GM12878 (cell line): ENCODE measurements at regions of chr12 and their contacts with region 1.

Region 1: GRCh38 chr12:79690638-79691493 is at the start of gene PAWR:
- DNase-seq: no peak
- ATAC-seq: peak; percentile 68
- H3K4me3 ChIP-seq: peak within 1 kb of the TSS; percentile 96
- H3K27ac ChIP-seq: peak within 1 kb of the TSS; percentile 86
- H3K4me1 ChIP-seq: 0 out of 2 replicates have a peak, but pooled peaks cover 5% of the 10 kb centered on the region
- H3K27me3 ChIP-seq: no peaks in the 10 kb centered on the region
- CTCF ChIP-seq: peak; percentile 19 to 57 (median 31); a peak in 4 of 6 replicates
- EP300 ChIP-seq: no peak
- POLR2A ChIP-seq: 0 out of 2 replicates have a peak, but pooled peaks have one; percentile 46
- RAD21 ChIP-seq: peak; percentile 39
- polyA plus RNA-seq, gene PAWR: 8.1 to 10.0 TPM

Region 2: DNA sequence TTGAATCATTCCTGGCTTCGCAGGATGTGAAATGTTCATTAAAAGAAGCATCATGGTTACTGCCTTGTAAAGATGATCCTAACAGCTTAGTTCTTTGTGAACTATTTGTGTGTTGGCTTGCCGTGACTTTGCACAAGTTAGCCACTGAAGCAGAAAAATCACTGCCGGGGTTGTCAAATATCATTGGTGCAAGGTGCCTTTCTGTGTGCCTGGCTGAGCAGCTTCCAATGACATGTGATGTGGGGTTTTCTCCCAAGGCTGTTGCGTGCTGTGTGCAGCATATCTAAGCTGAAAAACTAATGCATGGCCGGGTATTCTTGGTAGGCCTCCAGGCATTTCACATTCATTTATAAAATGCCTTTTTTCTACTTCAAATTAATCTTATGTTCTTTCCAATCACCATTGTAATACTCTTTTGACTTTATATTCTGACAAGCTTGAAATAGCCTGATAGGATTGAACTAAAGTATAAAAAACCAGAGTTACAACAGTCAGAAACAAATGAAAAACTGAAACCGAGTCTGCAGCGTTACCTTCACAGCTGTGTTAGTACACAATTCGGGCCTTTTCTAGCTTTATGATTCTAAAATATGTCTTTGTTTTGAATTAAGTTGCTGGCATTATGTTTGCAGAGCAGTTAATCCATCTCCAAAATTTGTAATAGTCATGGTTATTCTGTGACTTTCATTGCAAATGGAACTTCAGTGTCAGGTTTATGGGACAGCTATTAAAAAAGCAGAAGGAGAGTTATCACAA is 604.1 kb before region 1 on chr12:
- CTCF ChIA-PET with region 1: no interaction called
- POLR2A ChIA-PET with region 1: no interaction called
- RAD21 ChIA-PET with region 1: no interaction called
- SMC1A ChIA-PET with region 1: no interaction called
- in situ Hi-C with region 1: no loop called
- intact Hi-C with region 1: no loop called
- DNase-seq: no peak
- ATAC-seq: no peak
- H3K4me3 ChIP-seq: no peak overlapping the region
- H3K27ac ChIP-seq: no peak overlapping the region
- H3K4me1 ChIP-seq: no peaks in the 10 kb centered on the region
- H3K27me3 ChIP-seq: no peaks in the 10 kb centered on the region
- CTCF ChIP-seq: no peak
- EP300 ChIP-seq: no peak
- POLR2A ChIP-seq: no peak
- RAD21 ChIP-seq: no peak

Region 3: DNA sequence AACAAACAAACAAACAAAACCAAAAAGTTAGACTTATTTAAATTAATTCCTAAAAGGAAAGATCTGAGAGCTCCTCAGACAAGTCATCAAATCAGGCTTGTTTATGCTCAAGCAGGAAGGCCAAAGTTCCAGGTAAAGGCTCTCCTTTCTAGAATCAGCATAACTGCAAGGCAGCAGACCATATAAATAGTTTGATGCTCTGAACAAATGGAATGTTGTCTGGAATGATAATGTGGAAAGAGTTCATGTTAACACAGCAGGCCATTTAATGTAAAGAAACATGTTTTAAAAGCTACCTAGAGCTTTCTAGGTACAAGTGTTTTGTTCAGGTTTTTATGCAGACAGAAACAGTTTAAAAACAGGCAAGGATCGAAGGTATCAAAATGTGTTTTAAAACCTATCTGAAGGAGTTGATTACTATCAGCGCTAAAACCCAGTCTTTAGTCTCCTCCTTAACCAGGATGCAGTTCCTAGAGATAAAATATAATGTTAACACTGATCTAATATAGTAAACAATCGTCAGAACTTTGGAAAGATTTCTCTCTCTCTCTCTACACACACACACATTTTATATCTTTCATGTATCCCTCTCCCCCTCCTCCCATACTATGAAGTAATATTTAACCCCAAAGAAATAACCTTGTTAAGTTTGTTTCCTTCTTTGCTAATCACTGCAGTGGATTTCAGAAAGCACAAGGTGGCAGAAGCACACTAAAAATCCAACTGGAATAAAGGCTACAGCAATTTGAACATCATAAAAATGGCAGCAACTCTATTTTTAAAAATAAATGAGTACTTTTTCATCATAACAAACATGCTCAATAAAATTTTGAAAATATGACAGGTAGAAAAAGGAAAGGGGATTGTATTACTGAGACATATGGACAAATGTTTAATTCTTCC is 135.6 kb before region 1 on chr12:
- CTCF ChIA-PET with region 1: interaction called, 10 read pairs
- POLR2A ChIA-PET with region 1: interaction called, 3 read pairs
- RAD21 ChIA-PET with region 1: interaction called, 6 read pairs
- SMC1A ChIA-PET with region 1: interaction called, 6 read pairs
- in situ Hi-C with region 1: no loop called
- intact Hi-C with region 1: no loop called
- DNase-seq: no peak
- ATAC-seq: peak; percentile 39; the same call in 2 of the 3 replicates
- H3K4me3 ChIP-seq: no peak overlapping the region
- H3K27ac ChIP-seq: no peak overlapping the region
- H3K4me1 ChIP-seq: no peaks in the 10 kb centered on the region
- H3K27me3 ChIP-seq: no peaks in the 10 kb centered on the region
- CTCF ChIP-seq: peak; percentile 40 to 84 (median 48); a peak in 5 of 6 replicates
- EP300 ChIP-seq: no peak
- POLR2A ChIP-seq: no peak
- RAD21 ChIP-seq: peak; percentile 93

Region 4: DNA sequence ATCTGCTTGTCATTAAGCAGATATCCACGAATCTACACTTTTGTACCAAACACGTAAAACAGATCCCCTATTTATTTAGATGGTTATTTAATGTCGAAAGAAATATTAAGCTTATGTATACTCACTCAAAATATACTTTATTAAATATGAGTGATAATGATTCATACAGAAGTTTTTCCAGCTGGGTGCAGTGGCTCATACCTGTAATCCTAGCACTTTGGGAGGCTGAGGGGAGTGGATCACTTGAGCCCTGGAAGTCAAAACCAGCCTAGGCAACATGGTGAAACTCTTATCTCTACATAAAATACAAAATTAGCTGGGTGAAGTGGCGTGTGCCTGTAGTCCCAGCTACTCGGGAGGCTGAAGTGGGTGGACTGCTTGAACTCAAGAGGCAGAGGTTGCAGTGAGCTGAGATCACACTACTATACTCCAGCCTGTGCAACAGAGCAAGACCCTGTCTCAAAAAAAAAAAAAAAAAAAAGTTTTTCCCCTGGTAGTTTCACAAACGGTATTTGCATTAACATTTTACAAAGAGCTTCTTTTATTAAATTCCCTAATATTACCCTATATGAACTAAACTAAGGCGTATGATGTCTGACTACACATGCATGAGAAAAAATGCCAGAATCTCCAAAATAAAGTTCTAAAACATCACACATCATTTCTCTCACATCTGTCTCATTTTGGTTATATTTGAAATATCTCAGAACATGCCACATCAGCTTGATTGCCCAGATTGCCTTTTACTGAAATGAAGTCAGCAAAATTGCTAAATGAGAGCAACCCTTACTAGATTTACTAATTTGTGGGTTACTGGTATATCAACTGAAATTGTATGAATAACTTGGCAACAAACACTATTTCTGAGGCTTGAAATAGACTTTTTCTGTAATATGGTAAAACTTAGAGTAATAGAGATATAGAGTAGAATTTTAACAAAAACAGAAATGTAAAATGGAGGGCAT is 75.0 kb before region 1 on chr12:
- CTCF ChIA-PET with region 1: interaction called, 27 read pairs
- POLR2A ChIA-PET with region 1: interaction called, 29 read pairs
- RAD21 ChIA-PET with region 1: interaction called, 70 read pairs
- SMC1A ChIA-PET with region 1: interaction called, 55 read pairs
- in situ Hi-C with region 1: no loop called
- intact Hi-C with region 1: loop called (anchors 5 kb)
- DNase-seq: peak; percentile 21
- ATAC-seq: peak; percentile 89
- H3K4me3 ChIP-seq: no peak overlapping the region
- H3K27ac ChIP-seq: peak overlapping the region; percentile 42
- H3K4me1 ChIP-seq: peaks cover 9% of the 10 kb centered on the region
- H3K27me3 ChIP-seq: no peaks in the 10 kb centered on the region
- CTCF ChIP-seq: no peak
- EP300 ChIP-seq: peak; percentile 34 to 38; a peak in 2 of 4 replicates
- POLR2A ChIP-seq: no peak
- RAD21 ChIP-seq: no peak

Region 5: GRCh38 chr12:79674629-79675028 is 16.2 kb before region 1 on chr12:
- CTCF ChIA-PET with region 1: interaction called, 7 read pairs
- POLR2A ChIA-PET with region 1: interaction called, 12 read pairs
- RAD21 ChIA-PET with region 1: interaction called, 23 read pairs
- SMC1A ChIA-PET with region 1: interaction called, 14 read pairs
- in situ Hi-C with region 1: no loop called
- intact Hi-C with region 1: no loop called
- DNase-seq: no peak
- ATAC-seq: peak; percentile 28
- H3K4me3 ChIP-seq: no peak overlapping the region
- H3K27ac ChIP-seq: no peak overlapping the region
- H3K4me1 ChIP-seq: no peaks in the 10 kb centered on the region
- H3K27me3 ChIP-seq: no peaks in the 10 kb centered on the region
- CTCF ChIP-seq: no peak
- EP300 ChIP-seq: no peak
- POLR2A ChIP-seq: no peak
- RAD21 ChIP-seq: no peak

Region 6: GRCh38 chr12:79773896-79774295 is 83.0 kb after region 1 on chr12:
- CTCF ChIA-PET with region 1: no interaction called
- POLR2A ChIA-PET with region 1: no interaction called
- RAD21 ChIA-PET with region 1: no interaction called
- SMC1A ChIA-PET with region 1: no interaction called
- in situ Hi-C with region 1: no loop called
- intact Hi-C with region 1: no loop called
- DNase-seq: no peak
- ATAC-seq: no peak
- H3K4me3 ChIP-seq: no peak overlapping the region
- H3K27ac ChIP-seq: no peak overlapping the region
- H3K4me1 ChIP-seq: no peaks in the 10 kb centered on the region
- H3K27me3 ChIP-seq: no peaks in the 10 kb centered on the region
- CTCF ChIP-seq: no peak
- EP300 ChIP-seq: no peak
- POLR2A ChIP-seq: no peak
- RAD21 ChIP-seq: no peak

Region 7: DNA sequence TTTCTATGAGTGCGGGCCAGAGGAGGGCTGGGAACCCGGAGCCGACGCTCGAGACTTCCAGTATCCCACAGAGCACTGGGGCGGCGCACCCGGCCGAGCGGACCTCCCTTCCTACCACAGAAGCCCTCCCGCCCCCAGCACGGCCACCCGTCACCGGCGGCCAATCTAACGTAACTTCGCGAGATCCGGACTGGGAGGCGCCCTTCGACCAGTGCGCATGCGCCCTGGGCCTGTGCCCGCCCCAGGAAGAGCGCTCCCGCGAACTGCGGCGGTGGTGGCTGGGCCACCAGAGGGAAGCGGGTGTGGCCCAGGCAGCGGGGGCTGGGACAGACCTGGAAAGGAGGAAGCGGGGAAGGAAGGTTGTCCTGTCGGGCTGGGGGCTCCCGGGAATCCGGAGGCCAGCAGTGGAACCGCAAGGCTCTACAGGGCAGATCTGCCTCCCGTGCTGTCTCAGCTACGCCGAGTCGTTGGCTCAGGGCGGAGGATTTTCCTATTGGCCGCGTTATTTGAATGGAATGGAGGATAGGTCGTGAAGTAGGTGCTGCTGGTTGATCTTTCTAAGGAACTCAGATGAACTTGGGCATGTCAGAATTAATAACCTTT is 244.3 kb after region 1 on chr12 and contains the start of gene PPP1R12A:
- CTCF ChIA-PET with region 1: no interaction called
- POLR2A ChIA-PET with region 1: interaction called, 3 read pairs
- RAD21 ChIA-PET with region 1: no interaction called
- SMC1A ChIA-PET with region 1: no interaction called
- in situ Hi-C with region 1: no loop called
- intact Hi-C with region 1: loop called (anchors 5 kb)
- DNase-seq: peak; percentile 83
- ATAC-seq: peak; percentile 91
- H3K4me3 ChIP-seq: peak within 1 kb of the TSS; percentile 96
- H3K27ac ChIP-seq: peak within 1 kb of the TSS; percentile 96
- H3K4me1 ChIP-seq: peaks cover 7% of the 10 kb centered on the region; the same call in 1 of the 2 replicates
- H3K27me3 ChIP-seq: no peaks in the 10 kb centered on the region
- CTCF ChIP-seq: peak in 1 of 3 experiments; percentile 9; a peak in 1 of 6 replicates
- EP300 ChIP-seq: no peak
- POLR2A ChIP-seq: peak; percentile 97
- RAD21 ChIP-seq: no peak
- polyA plus RNA-seq, gene PPP1R12A: 22.8 to 31.6 TPM

Region 8: DNA sequence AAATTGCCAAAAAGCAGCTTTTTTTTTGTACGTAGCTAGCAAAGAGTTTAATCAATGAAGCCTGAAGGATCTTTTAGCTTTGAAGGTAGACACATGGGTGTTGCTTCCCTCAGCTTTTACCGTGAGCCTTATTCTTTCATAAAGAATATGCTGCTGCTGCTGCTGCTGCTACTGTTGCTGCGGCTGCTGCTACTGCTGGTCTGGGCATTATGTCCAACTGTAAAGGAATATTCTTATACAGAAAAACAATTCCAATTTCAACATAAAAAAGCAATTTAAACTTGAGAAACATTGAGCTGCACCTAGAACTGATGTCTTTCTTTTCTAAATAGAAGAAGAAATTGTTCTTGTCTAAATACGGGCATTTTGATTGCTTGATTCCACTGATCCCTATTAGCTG is 282.9 kb after region 1 on chr12:
- CTCF ChIA-PET with region 1: no interaction called
- POLR2A ChIA-PET with region 1: no interaction called
- RAD21 ChIA-PET with region 1: no interaction called
- SMC1A ChIA-PET with region 1: no interaction called
- in situ Hi-C with region 1: no loop called
- intact Hi-C with region 1: no loop called
- DNase-seq: no peak
- ATAC-seq: no peak
- H3K4me3 ChIP-seq: no peak overlapping the region
- H3K27ac ChIP-seq: no peak overlapping the region
- H3K4me1 ChIP-seq: no peaks in the 10 kb centered on the region
- H3K27me3 ChIP-seq: no peaks in the 10 kb centered on the region; a peak in 1 of 4 replicates
- CTCF ChIP-seq: no peak
- EP300 ChIP-seq: no peak
- POLR2A ChIP-seq: no peak
- RAD21 ChIP-seq: no peak

Region 9: GRCh38 chr12:80015660-80016059 is 324.8 kb after region 1 on chr12:
- CTCF ChIA-PET with region 1: no interaction called
- POLR2A ChIA-PET with region 1: no interaction called
- RAD21 ChIA-PET with region 1: no interaction called
- SMC1A ChIA-PET with region 1: no interaction called
- in situ Hi-C with region 1: no loop called
- intact Hi-C with region 1: no loop called
- DNase-seq: no peak
- ATAC-seq: no peak
- H3K4me3 ChIP-seq: no peak overlapping the region
- H3K27ac ChIP-seq: no peak overlapping the region
- H3K4me1 ChIP-seq: no peaks in the 10 kb centered on the region
- H3K27me3 ChIP-seq: no peaks in the 10 kb centered on the region; a peak in 2 of 4 replicates
- CTCF ChIP-seq: no peak
- EP300 ChIP-seq: no peak
- POLR2A ChIP-seq: no peak
- RAD21 ChIP-seq: no peak